MCF 10A (cell line): ENCODE measurements at regions of chr17 and their contacts with region 1.

Region 1: GRCh38 chr17:5592382-5592781 is 8.1 kb upstream of the NLRP1 start:
- DNase-seq: peak; percentile 59
- H3K4me3 Mint-ChIP-seq: no peak overlapping the region
- H3K27ac Mint-ChIP-seq: no peak overlapping the region
- H3K4me1 Mint-ChIP-seq: peaks cover 2% of the 10 kb centered on the region
- H3K27me3 Mint-ChIP-seq: peaks cover 52% of the 10 kb centered on the region
- CTCF ChIP-seq: peak; percentile 46

Region 2: GRCh38 chr17:5580367-5580766 is 12.0 kb before region 1 on chr17:
- CTCF ChIA-PET with region 1: no interaction called
- POLR2A ChIA-PET with region 1: no interaction called
- intact Hi-C with region 1: no loop called
- DNase-seq: peak; percentile 26
- H3K4me3 Mint-ChIP-seq: no peak overlapping the region
- H3K27ac Mint-ChIP-seq: no peak overlapping the region
- H3K4me1 Mint-ChIP-seq: peaks cover 16% of the 10 kb centered on the region
- H3K27me3 Mint-ChIP-seq: no peaks in the 10 kb centered on the region
- CTCF ChIP-seq: no peak

Region 3: GRCh38 chr17:5686074-5686635 is 93.8 kb after region 1 on chr17:
- CTCF ChIA-PET with region 1: no interaction called
- POLR2A ChIA-PET with region 1: no interaction called
- intact Hi-C with region 1: no loop called
- DNase-seq: no peak
- H3K4me3 Mint-ChIP-seq: no peak overlapping the region
- H3K27ac Mint-ChIP-seq: no peak overlapping the region
- H3K4me1 Mint-ChIP-seq: no peaks in the 10 kb centered on the region
- H3K27me3 Mint-ChIP-seq: peaks cover 60% of the 10 kb centered on the region
- CTCF ChIP-seq: no peak

Region 4: DNA sequence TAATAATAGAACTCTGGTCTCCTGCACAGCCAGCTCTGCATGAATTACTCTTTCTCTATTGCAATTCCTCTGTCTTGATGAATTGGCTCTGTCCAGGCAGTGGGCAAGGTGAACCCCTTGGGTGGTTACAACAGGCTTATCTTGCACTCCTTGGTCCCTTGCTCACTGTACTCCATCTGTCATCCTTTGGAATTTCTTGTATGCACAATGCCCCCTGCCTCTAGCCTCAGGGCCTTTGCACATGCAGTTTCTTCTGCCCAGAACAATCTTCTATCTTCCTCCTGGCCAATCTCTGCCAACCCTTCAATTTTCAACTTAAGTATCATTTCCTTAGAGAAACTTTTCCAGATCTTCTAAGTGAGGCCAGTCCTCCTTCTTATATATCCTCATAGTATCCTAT is 106.6 kb after region 1 on chr17:
- CTCF ChIA-PET with region 1: no interaction called
- POLR2A ChIA-PET with region 1: no interaction called
- intact Hi-C with region 1: no loop called
- DNase-seq: no peak
- H3K4me3 Mint-ChIP-seq: no peak overlapping the region
- H3K27ac Mint-ChIP-seq: no peak overlapping the region
- H3K4me1 Mint-ChIP-seq: no peaks in the 10 kb centered on the region
- H3K27me3 Mint-ChIP-seq: peaks cover 61% of the 10 kb centered on the region
- CTCF ChIP-seq: no peak

Region 5: DNA sequence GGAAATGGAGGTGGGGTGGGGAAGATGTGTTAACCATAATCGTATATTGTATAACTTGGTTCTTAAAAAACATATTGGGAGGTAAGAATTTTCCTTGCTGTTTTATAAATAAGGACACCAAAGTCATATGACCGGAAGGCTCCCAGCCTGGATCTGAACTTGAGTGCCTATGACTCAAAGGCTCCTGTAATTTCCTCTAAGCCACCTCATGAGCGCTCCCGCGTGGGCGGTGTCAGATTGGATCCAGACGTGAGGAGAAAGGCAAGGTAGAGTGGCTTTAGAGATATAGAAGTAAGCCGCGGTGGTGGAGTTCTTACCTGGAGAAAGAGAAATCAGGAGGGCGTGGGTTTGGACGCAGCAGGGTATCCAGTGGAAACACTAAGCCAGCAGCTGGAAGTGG is 188.1 kb after region 1 on chr17:
- CTCF ChIA-PET with region 1: interaction called, 3 read pairs
- POLR2A ChIA-PET with region 1: no interaction called
- intact Hi-C with region 1: loop called (anchors 2 kb)
- DNase-seq: peak; percentile 82
- H3K4me3 Mint-ChIP-seq: no peak overlapping the region
- H3K27ac Mint-ChIP-seq: peak overlapping the region; percentile 9
- H3K4me1 Mint-ChIP-seq: peaks cover 36% of the 10 kb centered on the region
- H3K27me3 Mint-ChIP-seq: no peaks in the 10 kb centered on the region
- CTCF ChIP-seq: peak; percentile 22

Region 6: GRCh38 chr17:6054375-6054774 is 462.0 kb after region 1 on chr17:
- CTCF ChIA-PET with region 1: no interaction called
- POLR2A ChIA-PET with region 1: no interaction called
- intact Hi-C with region 1: loop called (anchors 5 kb)
- DNase-seq: no peak
- H3K4me3 Mint-ChIP-seq: no peak overlapping the region
- H3K27ac Mint-ChIP-seq: no peak overlapping the region
- H3K4me1 Mint-ChIP-seq: no peaks in the 10 kb centered on the region
- H3K27me3 Mint-ChIP-seq: peaks cover 32% of the 10 kb centered on the region
- CTCF ChIP-seq: no peak

Region 7: DNA sequence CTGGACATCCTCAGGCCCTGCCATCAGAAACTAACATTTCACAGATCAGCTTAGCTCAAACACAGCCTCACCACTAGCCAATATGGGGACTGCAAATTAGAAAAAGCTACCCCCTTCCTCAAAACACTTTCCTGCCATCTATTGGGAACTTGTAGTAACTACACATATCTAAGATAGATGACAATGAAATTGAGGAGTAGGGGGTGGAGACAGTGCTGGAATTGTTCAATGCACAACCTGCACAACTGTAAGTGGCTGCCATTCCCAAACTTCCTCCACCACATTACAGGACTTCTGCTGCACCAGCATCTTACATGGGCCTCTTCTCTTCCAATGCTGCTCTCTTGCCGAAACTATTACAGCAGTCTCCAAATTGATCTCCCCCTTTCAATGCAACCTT is 820.7 kb after region 1 on chr17:
- CTCF ChIA-PET with region 1: interaction called, 24 read pairs
- POLR2A ChIA-PET with region 1: interaction called, 4 read pairs
- intact Hi-C with region 1: loop called (anchors 1 kb)
- DNase-seq: peak; percentile 61
- H3K4me3 Mint-ChIP-seq: no peak overlapping the region
- H3K27ac Mint-ChIP-seq: no peak overlapping the region
- H3K4me1 Mint-ChIP-seq: no peaks in the 10 kb centered on the region
- H3K27me3 Mint-ChIP-seq: peaks cover 42% of the 10 kb centered on the region
- CTCF ChIP-seq: peak; percentile 53